Activated T-helper 1 cell treated with anti-CD3 and anti-CD28 coated beads, Interleukin-12 subunit alpha, Interleukin-12 subunit beta, Interleukin-2, Interleukin-4 antibody, amounts not matched to agents 30 ng/mL and 10 ng/mL and 1 ng/mL, durations not matched to agents 14 hours and 24 hours and 36 hours (primary cell): ENCODE measurements at regions of chr17 and their contacts with region 1.

Region 1: DNA sequence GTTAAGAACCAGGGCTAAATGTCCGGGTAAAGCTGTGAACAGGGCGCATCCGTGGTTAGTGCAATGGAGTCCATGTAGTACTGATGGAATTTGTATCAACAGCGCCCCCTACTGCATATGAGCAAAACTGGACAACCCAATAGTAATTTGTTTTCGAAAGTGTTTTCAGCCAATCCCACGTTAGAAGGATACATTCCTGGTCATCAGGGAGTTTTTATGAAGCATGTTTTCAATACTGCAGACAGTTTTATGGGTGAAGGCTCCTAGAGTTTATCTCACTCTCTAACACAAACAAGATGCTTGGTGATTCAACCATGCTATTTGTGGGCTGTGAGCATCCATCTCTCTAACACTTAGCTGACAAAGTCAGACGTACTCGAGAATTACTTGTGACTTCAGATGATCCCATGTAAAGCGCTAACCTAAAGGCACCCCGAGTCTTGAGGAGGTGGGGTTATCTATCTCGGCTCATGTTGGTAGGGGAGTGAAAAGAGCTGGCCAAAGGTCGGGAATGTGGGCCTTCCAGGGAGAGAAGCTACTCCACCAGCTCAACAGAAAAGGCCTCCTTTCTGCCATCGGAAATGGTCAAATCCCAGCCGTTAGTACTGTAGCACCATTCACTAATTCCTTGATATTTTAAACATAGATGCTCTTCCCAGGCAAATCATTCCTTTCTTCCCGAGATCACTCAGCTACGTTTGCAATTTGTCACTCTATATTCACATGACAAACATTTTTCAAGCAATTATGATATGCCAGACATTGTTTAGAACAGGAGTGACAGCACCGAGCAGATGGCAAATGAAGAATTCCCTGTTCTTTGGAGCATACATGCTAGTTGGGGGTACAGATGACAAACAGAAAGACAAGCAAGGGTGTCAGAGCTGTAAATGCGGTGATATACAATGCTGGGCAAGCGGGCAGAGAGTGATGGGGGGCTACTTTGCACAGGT is 46.9 kb upstream of the HNF1B start:
- DNase-seq: peak; percentile 43
- H3K4me3 Mint-ChIP-seq: no peak overlapping the region
- H3K27ac Mint-ChIP-seq: no peak overlapping the region
- H3K4me1 Mint-ChIP-seq: no peaks in the 10 kb centered on the region
- H3K27me3 Mint-ChIP-seq: peaks cover 15% of the 10 kb centered on the region

Region 2: GRCh38 chr17:37527249-37527851 is 264.4 kb before region 1 on chr17:
- intact Hi-C with region 1: loop called (anchors 1 kb)
- DNase-seq: no peak
- H3K4me3 Mint-ChIP-seq: no peak overlapping the region
- H3K27ac Mint-ChIP-seq: no peak overlapping the region
- H3K4me1 Mint-ChIP-seq: peaks cover 17% of the 10 kb centered on the region
- H3K27me3 Mint-ChIP-seq: no peaks in the 10 kb centered on the region

Region 3: GRCh38 chr17:37650419-37651003 is 141.2 kb before region 1 on chr17:
- intact Hi-C with region 1: loop called (anchors 2 kb)
- DNase-seq: no peak
- H3K4me3 Mint-ChIP-seq: no peak overlapping the region
- H3K27ac Mint-ChIP-seq: no peak overlapping the region
- H3K4me1 Mint-ChIP-seq: peaks cover 18% of the 10 kb centered on the region
- H3K27me3 Mint-ChIP-seq: peaks cover 67% of the 10 kb centered on the region

Region 4: GRCh38 chr17:37717627-37718323 is 73.9 kb before region 1 on chr17:
- intact Hi-C with region 1: no loop called
- DNase-seq: no peak
- H3K4me3 Mint-ChIP-seq: no peak overlapping the region
- H3K27ac Mint-ChIP-seq: no peak overlapping the region
- H3K4me1 Mint-ChIP-seq: peaks cover 7% of the 10 kb centered on the region
- H3K27me3 Mint-ChIP-seq: peaks cover 18% of the 10 kb centered on the region

Region 5: GRCh38 chr17:37744961-37745800 is 46.5 kb before region 1 on chr17 and contains the start of gene HNF1B:
- intact Hi-C with region 1: loop called (anchors 1 kb)
- DNase-seq: no peak
- H3K4me3 Mint-ChIP-seq: peak within 1 kb of the TSS; percentile 84
- H3K27ac Mint-ChIP-seq: peak within 1 kb of the TSS; percentile 66
- H3K4me1 Mint-ChIP-seq: peaks cover 33% of the 10 kb centered on the region
- H3K27me3 Mint-ChIP-seq: peaks cover 68% of the 10 kb centered on the region
- total RNA-seq, gene HNF1B: 3.2 and 3.6 TPM in 2 replicates

Region 6: DNA sequence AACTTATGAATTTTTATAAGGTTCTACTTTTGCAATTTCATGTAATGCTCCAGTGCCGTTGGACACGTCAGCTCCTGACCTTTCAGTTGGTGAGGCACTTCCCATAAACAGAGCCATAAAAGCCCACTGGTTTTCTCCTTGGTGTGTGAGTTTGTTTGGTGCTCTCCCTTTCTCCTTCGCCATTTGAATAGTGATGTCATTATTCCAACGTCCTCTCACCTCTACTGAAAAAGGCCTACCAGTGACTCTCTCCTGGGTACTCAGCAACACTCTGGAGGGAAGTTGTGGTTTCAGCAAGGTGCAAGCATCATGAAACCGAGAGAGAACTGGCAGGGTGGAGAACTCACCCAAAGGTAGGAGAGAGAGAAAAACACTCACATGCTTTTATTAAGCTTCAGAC is 17.2 kb before region 1 on chr17:
- intact Hi-C with region 1: no loop called
- DNase-seq: peak; percentile 42
- H3K4me3 Mint-ChIP-seq: peak overlapping the region; percentile 17
- H3K27ac Mint-ChIP-seq: peak overlapping the region; percentile 77
- H3K4me1 Mint-ChIP-seq: peaks cover 55% of the 10 kb centered on the region
- H3K27me3 Mint-ChIP-seq: peaks cover 9% of the 10 kb centered on the region

Region 7: GRCh38 chr17:37818689-37819088 is 27.0 kb after region 1 on chr17:
- intact Hi-C with region 1: loop called (anchors 1 kb)
- DNase-seq: no peak
- H3K4me3 Mint-ChIP-seq: no peak overlapping the region
- H3K27ac Mint-ChIP-seq: no peak overlapping the region
- H3K4me1 Mint-ChIP-seq: peaks cover 27% of the 10 kb centered on the region
- H3K27me3 Mint-ChIP-seq: peaks cover 20% of the 10 kb centered on the region

Region 8: DNA sequence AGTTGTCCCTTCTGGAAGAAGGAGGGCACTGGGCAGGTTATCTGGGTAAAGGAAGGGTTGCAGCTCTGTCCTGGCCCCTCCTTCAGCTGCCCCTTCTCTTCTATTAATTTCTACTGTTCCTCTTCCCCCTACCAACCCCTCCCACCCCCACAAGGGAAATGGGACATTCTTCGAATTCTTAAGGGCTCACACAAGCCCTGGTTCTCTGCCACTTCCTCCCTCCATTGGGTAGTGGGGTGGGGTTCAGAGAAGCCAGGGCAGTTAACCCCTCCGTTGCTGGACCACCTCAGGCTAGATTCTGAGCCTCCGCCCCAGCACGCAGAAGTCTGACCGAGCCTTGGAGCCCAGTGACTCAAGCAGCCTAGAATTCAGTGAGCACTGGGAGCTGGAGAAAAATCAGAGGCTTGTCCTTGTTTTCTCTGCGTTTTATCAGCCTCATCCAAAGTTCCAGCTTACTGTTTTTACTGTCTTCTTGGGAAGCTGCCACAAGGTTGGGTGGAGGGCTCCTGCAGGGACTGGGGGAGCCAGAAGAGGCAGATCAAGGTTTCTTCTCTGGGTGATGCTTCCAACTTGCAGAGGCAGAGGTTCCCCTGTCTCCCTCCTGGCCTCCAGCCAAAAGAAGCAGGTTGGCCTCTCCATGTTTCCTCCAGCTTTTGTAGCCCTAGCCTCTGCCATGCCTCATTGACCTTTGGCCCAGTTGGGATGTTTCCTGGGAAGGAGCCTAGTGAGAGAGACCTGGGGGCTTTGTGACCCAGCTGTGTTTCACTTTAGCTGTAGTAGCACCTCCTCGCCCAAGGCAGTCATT is 1088.4 kb after region 1 on chr17:
- intact Hi-C with region 1: no loop called
- DNase-seq: no peak
- H3K4me3 Mint-ChIP-seq: peak overlapping the region; percentile 51
- H3K27ac Mint-ChIP-seq: peak overlapping the region; percentile 80
- H3K4me1 Mint-ChIP-seq: peaks cover 76% of the 10 kb centered on the region
- H3K27me3 Mint-ChIP-seq: no peaks in the 10 kb centered on the region